Left cardiac atrium (tissue), 4 donors: ENCODE measurements at regions of chr11 and their contacts with region 1.

Region 1: GRCh38 chr11:93895106-93895862 is 44.9 kb upstream of the VSTM5 start:
- DNase-seq: no peak
- ATAC-seq: peak; percentile 77 to 82

Region 2: DNA sequence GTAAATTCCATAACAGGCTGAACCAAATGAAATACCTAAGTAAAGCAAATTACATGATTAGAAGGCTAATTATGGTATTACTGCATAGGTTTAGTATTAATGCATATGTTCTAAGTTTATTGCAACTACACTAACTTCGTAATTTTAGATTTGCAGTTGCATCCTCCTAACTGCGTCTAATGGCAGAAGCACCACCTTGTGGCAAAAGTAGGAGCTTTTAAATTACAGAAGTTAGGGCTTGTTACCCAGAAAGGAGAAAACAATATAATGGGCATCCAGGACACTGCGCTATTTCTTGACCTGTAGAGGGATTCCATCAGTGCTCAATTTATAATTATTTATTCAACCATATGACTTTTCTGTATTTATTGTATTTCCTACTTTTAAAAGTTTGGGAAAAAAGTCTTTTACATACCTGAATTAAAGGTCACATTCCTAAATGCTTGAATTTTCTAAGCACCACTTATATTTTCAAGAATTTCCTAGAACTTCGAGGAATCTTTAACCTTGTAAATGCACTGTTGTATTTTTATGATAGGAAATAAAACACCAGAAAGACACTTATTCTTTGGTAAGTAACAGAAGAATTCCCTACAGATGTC is 522.2 kb after region 1 on chr11:
- intact Hi-C with region 1: loop called in 1 of 2 experiments (anchors 2 kb)
- DNase-seq: no peak
- ATAC-seq: peak; percentile 35 to 38

Region 3: DNA sequence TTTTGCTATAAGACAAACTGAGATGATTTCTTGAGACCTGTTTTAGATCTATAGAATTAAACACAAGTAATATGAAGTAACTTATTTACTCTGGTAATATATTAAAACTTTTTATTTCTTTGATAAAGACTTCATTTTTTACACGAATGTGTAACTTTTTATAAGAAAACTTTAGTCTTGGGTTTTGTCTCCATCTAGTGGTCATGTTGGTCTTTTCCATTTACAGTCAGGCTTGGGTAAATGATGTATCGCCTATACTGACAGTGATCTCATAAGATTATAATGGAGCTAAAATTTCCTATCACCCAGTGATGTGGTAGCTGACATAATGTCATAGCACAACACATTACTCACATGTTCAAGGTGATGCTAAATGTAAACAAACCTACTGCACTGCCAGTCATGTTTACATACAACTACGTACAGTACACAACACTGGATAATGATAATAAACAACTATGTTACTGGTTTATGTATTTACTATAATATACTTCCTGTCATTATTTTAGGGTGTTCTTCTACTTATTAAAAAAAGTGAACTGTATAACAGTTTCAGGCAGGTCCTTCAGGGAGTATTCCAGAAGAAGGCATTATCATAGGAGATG is 609.5 kb after region 1 on chr11:
- intact Hi-C with region 1: loop called in 1 of 2 experiments (anchors 10 kb)
- DNase-seq: no peak
- ATAC-seq: no peak